ENCODE measurements at regions of chr7 and their contacts with region 1.

Region 1: GRCh38 chr7:37031571-37032257 is 307.4 kb upstream of the AOAH start:
- DNase-seq: peak; percentile 19
- H3K4me3 Mint-ChIP-seq: no peak overlapping the region
- H3K27ac Mint-ChIP-seq: peak overlapping the region; percentile 69
- H3K4me1 Mint-ChIP-seq: peaks cover 59% of the 10 kb centered on the region
- H3K27me3 Mint-ChIP-seq: no peaks in the 10 kb centered on the region

Region 2: GRCh38 chr7:36962367-36962766 is 69.3 kb before region 1 on chr7:
- intact Hi-C with region 1: loop called (anchors 2 kb)
- DNase-seq: no peak
- H3K4me3 Mint-ChIP-seq: no peak overlapping the region
- H3K27ac Mint-ChIP-seq: peak overlapping the region; percentile 55
- H3K4me1 Mint-ChIP-seq: peaks cover 44% of the 10 kb centered on the region
- H3K27me3 Mint-ChIP-seq: no peaks in the 10 kb centered on the region

Region 3: GRCh38 chr7:37065779-37066271 is 34.1 kb after region 1 on chr7:
- intact Hi-C with region 1: loop called (anchors 1 kb)
- DNase-seq: no peak
- H3K4me3 Mint-ChIP-seq: peak overlapping the region; percentile 16
- H3K27ac Mint-ChIP-seq: peak overlapping the region; percentile 88
- H3K4me1 Mint-ChIP-seq: peaks cover 48% of the 10 kb centered on the region
- H3K27me3 Mint-ChIP-seq: no peaks in the 10 kb centered on the region

Region 4: DNA sequence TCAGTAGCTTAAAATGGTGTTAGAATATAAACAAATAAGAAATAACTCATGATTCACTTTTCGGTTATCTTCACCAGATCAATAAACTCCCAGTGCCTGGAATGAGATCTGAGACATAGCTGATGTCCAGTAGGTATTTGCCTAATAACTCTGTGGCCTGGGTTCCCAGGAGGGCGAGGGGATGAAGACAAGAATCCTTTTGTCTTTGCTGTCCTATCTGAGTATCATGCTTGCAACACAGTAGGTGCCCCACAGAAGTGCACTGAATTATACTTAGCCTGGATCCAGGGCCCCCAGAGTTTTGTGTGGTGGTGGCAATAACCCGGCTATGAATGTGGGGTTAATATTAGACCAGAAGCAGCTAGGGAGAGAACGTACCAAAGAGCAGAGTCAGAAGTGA is 42.7 kb after region 1 on chr7:
- intact Hi-C with region 1: loop called (anchors 1 kb)
- DNase-seq: no peak
- H3K4me3 Mint-ChIP-seq: no peak overlapping the region
- H3K27ac Mint-ChIP-seq: no peak overlapping the region
- H3K4me1 Mint-ChIP-seq: peaks cover 46% of the 10 kb centered on the region
- H3K27me3 Mint-ChIP-seq: no peaks in the 10 kb centered on the region

Region 5: DNA sequence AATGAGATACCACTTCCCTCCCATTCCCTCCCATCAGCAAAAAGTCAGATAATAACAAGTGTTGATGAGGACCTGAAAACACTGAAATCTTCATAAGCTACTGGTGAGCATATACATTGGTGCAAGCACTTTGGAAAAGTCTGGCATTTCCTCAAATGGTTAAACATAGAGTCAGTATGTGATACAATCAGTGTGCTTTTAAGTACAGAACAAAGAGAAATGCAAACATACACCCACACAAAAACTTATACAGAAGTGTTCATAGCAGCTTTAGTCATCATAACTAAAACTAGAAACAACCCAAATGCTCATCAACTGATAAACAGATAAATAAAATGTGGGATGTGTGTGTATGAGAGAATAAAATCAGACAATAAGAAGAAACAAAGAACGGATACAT is 155.0 kb after region 1 on chr7:
- intact Hi-C with region 1: loop called (anchors 2 kb)
- DNase-seq: no peak
- H3K4me3 Mint-ChIP-seq: no peak overlapping the region
- H3K27ac Mint-ChIP-seq: no peak overlapping the region
- H3K4me1 Mint-ChIP-seq: peaks cover 11% of the 10 kb centered on the region
- H3K27me3 Mint-ChIP-seq: no peaks in the 10 kb centered on the region

Measured in activated T-helper 1 cell treated with anti-CD3 and anti-CD28 coated beads, Interleukin-12 subunit alpha, Interleukin-12 subunit beta, Interleukin-2, Interleukin-4 antibody, amounts not matched to agents 30 ng/mL and 10 ng/mL and 1 ng/mL, durations not matched to agents 14 hours and 24 hours and 36 hours (primary cell).